CD4-positive, alpha-beta memory T cell (primary cell): ENCODE measurements at regions of chr1 and their contacts with region 1.

Region 1: DNA sequence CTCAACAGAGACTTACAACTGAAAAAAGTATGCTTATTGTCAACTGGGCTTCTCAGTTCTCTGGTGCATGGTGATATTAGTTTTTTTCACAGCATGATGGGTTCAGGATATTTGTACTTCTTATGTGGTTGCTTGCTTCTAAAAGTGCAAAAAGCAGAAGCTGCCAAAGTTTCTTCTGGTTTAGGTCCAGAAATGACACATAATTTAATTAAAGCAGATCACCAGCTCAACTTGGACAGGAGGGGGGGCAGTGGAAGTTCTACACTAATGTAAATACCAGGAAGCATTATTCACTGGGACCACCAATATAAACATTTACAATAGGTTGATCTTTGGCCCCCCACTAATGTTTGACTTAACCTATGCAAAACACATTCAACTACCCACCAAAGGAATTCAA is 354.8 kb upstream of the BRINP3 start:
- DNase-seq: no peak
- H3K4me3 ChIP-seq: no peak overlapping the region
- H3K4me3 Mint-ChIP-seq: no peak overlapping the region
- H3K27ac ChIP-seq: no peak overlapping the region
- H3K27ac Mint-ChIP-seq: no peak overlapping the region
- H3K4me1 ChIP-seq: no peaks in the 10 kb centered on the region
- H3K4me1 Mint-ChIP-seq: no peaks in the 10 kb centered on the region
- H3K27me3 ChIP-seq: no peaks in the 10 kb centered on the region
- H3K27me3 Mint-ChIP-seq: no peaks in the 10 kb centered on the region

Region 2: DNA sequence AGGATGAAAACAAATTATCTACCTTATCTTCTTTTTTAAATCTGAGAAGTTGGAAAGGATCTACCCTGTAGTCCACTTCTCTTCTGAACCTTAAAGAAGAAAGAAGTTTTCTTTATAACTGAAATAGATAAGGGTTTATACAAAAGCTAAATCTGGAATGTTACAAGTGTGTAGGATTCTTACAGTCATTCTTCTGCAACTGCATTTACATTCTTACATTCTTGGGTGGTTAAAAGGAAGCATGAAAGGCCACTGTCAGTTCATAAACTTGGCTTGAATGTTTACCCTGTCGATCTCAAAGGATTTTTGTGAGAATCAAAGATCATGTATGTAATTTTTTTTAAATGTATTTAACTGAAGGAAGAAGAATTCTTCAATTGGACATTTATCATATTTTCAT is 212.8 kb before region 1 on chr1:
- CTCF ChIA-PET with region 1: no interaction called
- POLR2A ChIA-PET with region 1: no interaction called
- intact Hi-C with region 1: no loop called
- DNase-seq: no peak
- H3K4me3 ChIP-seq: no peak overlapping the region
- H3K4me3 Mint-ChIP-seq: no peak overlapping the region
- H3K27ac ChIP-seq: no peak overlapping the region
- H3K27ac Mint-ChIP-seq: no peak overlapping the region
- H3K4me1 ChIP-seq: no peaks in the 10 kb centered on the region
- H3K4me1 Mint-ChIP-seq: no peaks in the 10 kb centered on the region
- H3K27me3 ChIP-seq: no peaks in the 10 kb centered on the region
- H3K27me3 Mint-ChIP-seq: no peaks in the 10 kb centered on the region

Region 3: DNA sequence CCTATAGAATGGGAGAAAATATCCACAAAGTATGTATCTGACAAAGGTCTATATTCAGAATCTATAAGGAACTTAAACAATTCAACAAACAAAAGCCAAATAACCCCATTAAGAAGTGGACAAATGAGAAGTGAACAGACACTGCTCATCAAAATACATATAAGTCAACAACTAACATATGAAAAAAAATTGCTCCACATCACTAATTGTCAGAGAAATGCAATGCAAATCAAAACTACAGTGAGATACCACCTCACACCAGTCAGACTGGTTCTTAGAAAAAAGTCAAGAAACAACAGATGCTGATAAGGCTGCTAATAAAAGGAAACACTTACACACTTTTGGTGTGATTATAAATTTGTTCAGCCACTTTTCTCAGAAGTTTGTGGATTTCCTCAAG is 46.7 kb before region 1 on chr1:
- CTCF ChIA-PET with region 1: no interaction called
- POLR2A ChIA-PET with region 1: no interaction called
- intact Hi-C with region 1: no loop called
- DNase-seq: no peak
- H3K4me3 ChIP-seq: no peak overlapping the region
- H3K4me3 Mint-ChIP-seq: no peak overlapping the region
- H3K27ac ChIP-seq: no peak overlapping the region
- H3K27ac Mint-ChIP-seq: no peak overlapping the region
- H3K4me1 ChIP-seq: no peaks in the 10 kb centered on the region
- H3K4me1 Mint-ChIP-seq: no peaks in the 10 kb centered on the region
- H3K27me3 ChIP-seq: no peaks in the 10 kb centered on the region
- H3K27me3 Mint-ChIP-seq: no peaks in the 10 kb centered on the region

Region 4: DNA sequence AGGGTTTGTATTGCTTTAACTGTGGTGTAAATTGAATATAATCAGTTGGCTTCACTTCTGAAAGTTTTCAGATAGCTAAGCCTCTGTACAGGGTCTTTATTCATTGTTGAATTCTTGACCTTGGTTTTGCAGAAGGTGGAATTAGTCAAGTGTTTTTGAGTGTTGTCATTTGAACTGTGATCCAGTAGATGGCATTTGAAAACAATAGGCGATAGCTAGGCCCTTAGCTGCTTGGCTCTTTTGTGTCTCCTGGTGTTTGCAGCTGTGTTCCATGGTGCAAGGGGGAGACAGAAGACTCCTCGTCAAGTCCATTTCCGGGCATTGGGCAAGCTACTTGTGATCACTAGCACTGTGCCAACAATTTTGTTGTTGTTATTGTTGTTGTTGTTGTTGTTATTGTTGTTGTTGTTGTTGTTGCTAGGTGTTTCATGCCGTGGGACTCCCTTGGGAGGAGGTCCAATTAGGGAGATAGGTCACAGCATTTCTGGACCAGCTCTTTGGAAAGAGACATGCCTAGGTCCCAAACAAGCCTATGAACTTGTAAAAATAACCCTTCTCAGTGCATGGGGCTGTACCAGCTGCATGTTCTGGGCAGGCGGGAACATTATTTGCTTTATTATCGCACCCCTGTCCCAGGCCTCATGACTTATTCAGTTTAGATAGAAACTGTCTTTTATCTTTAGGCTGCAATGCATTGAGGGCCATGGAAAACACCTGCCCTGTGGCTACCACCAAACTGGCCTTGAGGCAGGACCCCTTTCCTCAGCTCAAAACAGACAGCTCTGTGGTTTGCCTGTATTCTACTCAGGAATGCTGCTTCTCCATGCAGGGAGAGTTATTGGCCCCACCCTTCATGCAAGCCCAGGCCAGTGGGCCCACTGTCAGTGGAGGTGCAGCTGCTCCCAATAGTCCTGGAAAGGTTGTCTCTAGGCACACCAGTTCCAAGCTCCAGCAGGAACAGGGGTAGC is 31.4 kb after region 1 on chr1:
- CTCF ChIA-PET with region 1: no interaction called
- POLR2A ChIA-PET with region 1: no interaction called
- intact Hi-C with region 1: loop called (anchors 1 kb)
- DNase-seq: peak in 1 of 5 donors; percentile 17
- H3K4me3 ChIP-seq: no peak overlapping the region
- H3K4me3 Mint-ChIP-seq: no peak overlapping the region
- H3K27ac ChIP-seq: no peak overlapping the region
- H3K27ac Mint-ChIP-seq: no peak overlapping the region
- H3K4me1 ChIP-seq: no peaks in the 10 kb centered on the region
- H3K4me1 Mint-ChIP-seq: no peaks in the 10 kb centered on the region
- H3K27me3 ChIP-seq: no peaks in the 10 kb centered on the region
- H3K27me3 Mint-ChIP-seq: no peaks in the 10 kb centered on the region